Dorsolateral prefrontal cortex (tissue), 120 donors: ENCODE measurements at regions of chr2 and their contacts with region 1.

Region 1: GRCh38 chr2:66495788-66496640 is 61.1 kb downstream of the MEIS1 start:
- DNase-seq: peak in 1 of 10 donors; percentile 53
- H3K4me3 ChIP-seq: no peak overlapping the region
- H3K27ac ChIP-seq: peak overlapping the region in 39 of 59 donors; percentile 4 to 78 (median 41)
- H3K27me3 ChIP-seq: no peaks in the 10 kb centered on the region
- CTCF ChIP-seq: peak in 5 of 56 donors; percentile 5 to 26 (median 12)

Region 2: DNA sequence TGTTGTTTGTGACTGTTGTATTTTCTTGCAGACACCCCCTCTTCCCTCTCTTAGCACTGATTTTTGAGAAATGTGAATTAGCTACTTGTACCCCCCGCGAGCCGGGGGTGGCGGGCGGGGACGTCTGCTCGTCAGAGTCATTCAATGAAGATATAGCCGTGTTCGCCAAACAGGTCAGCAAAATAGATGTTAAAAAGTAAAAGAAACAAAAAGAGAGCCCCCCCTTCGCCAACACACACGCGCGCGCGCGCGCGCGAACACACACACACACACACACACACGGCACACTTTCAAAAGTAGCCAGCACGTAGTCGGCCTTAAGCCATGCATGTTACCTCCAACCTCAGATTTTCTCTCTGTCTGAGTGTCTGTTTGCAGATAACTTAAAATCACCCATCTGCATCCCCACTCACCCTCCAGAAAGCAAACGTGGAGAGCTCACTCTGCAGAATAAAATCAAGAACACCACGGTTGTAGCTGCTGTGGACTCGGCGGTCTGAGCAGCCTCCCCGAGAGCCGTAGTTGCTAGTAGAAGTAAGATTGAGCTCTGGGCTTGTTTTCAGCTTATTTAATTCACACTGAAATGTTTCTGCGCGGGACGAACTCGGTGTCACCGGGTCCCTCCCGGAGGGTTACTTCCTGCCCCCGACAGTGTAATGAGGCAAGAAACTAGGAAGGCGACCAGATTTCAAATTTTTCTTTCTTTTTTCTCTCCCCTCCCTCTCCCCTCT is 56.0 kb before region 1 on chr2:
- intact Hi-C with region 1: loop called in 1 of 2 experiments (anchors 5 kb)
- DNase-seq: peak in 1 of 10 donors; percentile 40
- H3K4me3 ChIP-seq: peak overlapping the region; percentile 26 to 93 (median 74)
- H3K27ac ChIP-seq: peak overlapping the region in 55 of 59 donors; percentile 48 to 96 (median 80)
- H3K27me3 ChIP-seq: peaks cover 0 to 43% (median 0%) of the 10 kb centered on the region in 45 donors
- CTCF ChIP-seq: no peak

Region 3: GRCh38 chr2:66729416-66730300 is 233.6 kb after region 1 on chr2:
- intact Hi-C with region 1: no loop called
- DNase-seq: no peak
- H3K4me3 ChIP-seq: no peak overlapping the region
- H3K27ac ChIP-seq: no peak overlapping the region
- H3K27me3 ChIP-seq: peaks cover 0 to 10% (median 0%) of the 10 kb centered on the region in 45 donors
- CTCF ChIP-seq: no peak